Mammary epithelial cell (primary cell): ENCODE measurements at regions of chr20 and their contacts with region 1.

Region 1: GRCh38 chr20:5788385-5788895 is 38.2 kb downstream of the SHLD1 start:
- DNase-seq: peak; percentile 60
- H3K4me3 ChIP-seq: no peak overlapping the region
- H3K27ac ChIP-seq: no peak overlapping the region
- H3K4me1 ChIP-seq: no peaks in the 10 kb centered on the region
- H3K27me3 ChIP-seq: no peaks in the 10 kb centered on the region
- CTCF ChIP-seq: peak; percentile 80 to 91

Region 2: GRCh38 chr20:5557123-5557522 is 231.3 kb before region 1 on chr20:
- CTCF ChIA-PET with region 1: no interaction called
- dilution Hi-C with region 1: no loop called
- in situ Hi-C with region 1: no loop called
- intact Hi-C with region 1: loop called (anchors 1 kb)
- DNase-seq: peak; percentile 11
- H3K4me3 ChIP-seq: no peak overlapping the region
- H3K27ac ChIP-seq: no peak overlapping the region
- H3K4me1 ChIP-seq: no peaks in the 10 kb centered on the region
- H3K27me3 ChIP-seq: no peaks in the 10 kb centered on the region
- CTCF ChIP-seq: peak; percentile 57 to 61

Region 3: DNA sequence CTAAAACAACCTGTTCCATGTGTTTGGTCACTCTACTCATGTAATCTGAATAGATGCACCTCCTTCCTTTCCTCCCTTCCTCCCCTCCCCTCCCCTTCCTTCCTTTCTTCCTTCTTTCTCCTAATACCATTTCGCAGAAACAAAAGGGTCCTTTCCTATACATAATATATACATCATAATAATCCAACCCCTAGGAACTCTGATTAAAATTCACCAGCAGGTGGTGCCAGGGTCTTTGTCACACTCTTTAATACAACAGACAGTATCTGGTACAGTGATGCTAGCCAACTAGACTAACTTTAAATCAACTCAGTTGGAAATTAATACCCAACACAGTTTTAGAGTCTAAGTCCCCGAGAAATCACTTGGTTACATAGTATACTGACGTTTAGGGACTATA is 219.4 kb before region 1 on chr20:
- CTCF ChIA-PET with region 1: interaction called, 30 read pairs
- dilution Hi-C with region 1: no loop called
- in situ Hi-C with region 1: loop called in 1 of 2 experiments (anchors 10 kb)
- intact Hi-C with region 1: loop called (anchors 1 kb)
- DNase-seq: peak; percentile 27
- H3K4me3 ChIP-seq: no peak overlapping the region
- H3K27ac ChIP-seq: no peak overlapping the region
- H3K4me1 ChIP-seq: no peaks in the 10 kb centered on the region
- H3K27me3 ChIP-seq: no peaks in the 10 kb centered on the region
- CTCF ChIP-seq: peak; percentile 22 to 24

Region 4: GRCh38 chr20:5658912-5659345 is 129.5 kb before region 1 on chr20:
- CTCF ChIA-PET with region 1: interaction called, 6 read pairs
- dilution Hi-C with region 1: no loop called
- in situ Hi-C with region 1: no loop called
- intact Hi-C with region 1: loop called (anchors 5 kb)
- DNase-seq: peak; percentile 83
- H3K4me3 ChIP-seq: no peak overlapping the region
- H3K27ac ChIP-seq: peak overlapping the region; percentile 54
- H3K4me1 ChIP-seq: peaks cover 43% of the 10 kb centered on the region
- H3K27me3 ChIP-seq: no peaks in the 10 kb centered on the region
- CTCF ChIP-seq: no peak

Region 5: GRCh38 chr20:5844063-5844681 is 55.7 kb after region 1 on chr20:
- CTCF ChIA-PET with region 1: no interaction called
- dilution Hi-C with region 1: no loop called
- in situ Hi-C with region 1: no loop called
- intact Hi-C with region 1: no loop called
- DNase-seq: peak; percentile 26
- H3K4me3 ChIP-seq: no peak overlapping the region
- H3K27ac ChIP-seq: no peak overlapping the region
- H3K4me1 ChIP-seq: peaks cover 13% of the 10 kb centered on the region
- H3K27me3 ChIP-seq: no peaks in the 10 kb centered on the region
- CTCF ChIP-seq: no peak

Region 6: DNA sequence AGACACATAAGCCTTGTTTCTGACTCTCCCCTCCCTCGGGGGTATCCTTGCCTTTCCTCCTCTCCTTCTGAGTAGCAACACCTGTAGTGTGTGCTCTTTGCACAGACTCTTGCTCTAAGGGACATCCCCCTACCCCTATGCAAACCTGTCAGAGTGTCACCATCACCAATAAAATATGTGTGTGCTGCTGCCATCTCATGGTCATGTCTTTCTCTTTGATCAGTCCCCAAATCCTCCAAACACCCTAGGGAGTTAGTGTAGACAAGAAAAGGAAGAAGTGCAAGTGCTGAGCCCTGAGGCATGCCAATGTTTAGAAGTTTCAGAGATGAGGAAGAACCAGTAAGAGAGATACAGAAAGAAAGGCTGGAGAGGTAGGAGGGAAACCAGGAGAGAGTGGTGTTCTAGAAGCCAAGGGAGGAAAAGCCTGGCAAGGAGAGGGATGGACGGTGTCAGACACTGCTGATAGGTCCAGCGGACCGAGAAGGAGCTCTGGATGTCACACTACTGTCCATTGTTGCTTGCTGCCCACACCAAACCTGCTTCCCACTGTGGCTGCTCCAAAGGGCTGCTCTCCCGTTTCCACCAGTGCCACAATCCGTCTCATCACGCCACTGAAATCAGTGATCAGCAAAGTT is 145.5 kb after region 1 on chr20:
- CTCF ChIA-PET with region 1: no interaction called
- dilution Hi-C with region 1: no loop called
- in situ Hi-C with region 1: no loop called
- intact Hi-C with region 1: loop called (anchors 1 kb)
- DNase-seq: no peak
- H3K4me3 ChIP-seq: no peak overlapping the region
- H3K27ac ChIP-seq: no peak overlapping the region
- H3K4me1 ChIP-seq: no peaks in the 10 kb centered on the region
- H3K27me3 ChIP-seq: no peaks in the 10 kb centered on the region
- CTCF ChIP-seq: peak; percentile 28 to 56

Region 7: DNA sequence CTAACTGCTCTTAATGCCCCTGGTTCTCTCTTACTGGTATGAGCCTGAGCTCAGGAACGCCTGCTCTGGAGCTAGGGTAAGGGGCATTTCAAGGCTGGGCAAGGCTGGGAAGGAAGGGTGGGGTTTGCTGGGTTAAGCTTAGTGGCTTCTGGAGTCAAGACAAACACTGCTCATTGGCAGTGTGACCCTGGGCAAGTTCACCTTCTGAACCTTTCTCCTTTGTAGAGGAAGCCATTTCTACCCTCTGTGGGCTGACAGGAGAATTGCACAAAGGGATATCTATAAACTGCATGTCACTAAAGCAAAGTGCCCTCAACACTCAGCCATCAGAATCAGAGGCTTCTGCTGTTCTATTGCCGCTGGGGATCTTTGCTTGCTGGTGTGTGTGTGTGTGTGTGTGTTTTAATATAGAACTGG is 285.7 kb after region 1 on chr20:
- CTCF ChIA-PET with region 1: no interaction called
- dilution Hi-C with region 1: no loop called
- in situ Hi-C with region 1: no loop called
- intact Hi-C with region 1: loop called (anchors 5 kb)
- DNase-seq: no peak
- H3K4me3 ChIP-seq: no peak overlapping the region
- H3K27ac ChIP-seq: no peak overlapping the region
- H3K4me1 ChIP-seq: no peaks in the 10 kb centered on the region
- H3K27me3 ChIP-seq: no peaks in the 10 kb centered on the region
- CTCF ChIP-seq: peak; percentile 13 to 30

Region 8: GRCh38 chr20:6583134-6583738 is 794.8 kb after region 1 on chr20:
- CTCF ChIA-PET with region 1: no interaction called
- dilution Hi-C with region 1: no loop called
- in situ Hi-C with region 1: no loop called
- intact Hi-C with region 1: no loop called
- DNase-seq: peak; percentile 58
- H3K4me3 ChIP-seq: no peak overlapping the region
- H3K27ac ChIP-seq: no peak overlapping the region
- H3K4me1 ChIP-seq: peaks cover 10% of the 10 kb centered on the region
- H3K27me3 ChIP-seq: no peaks in the 10 kb centered on the region
- CTCF ChIP-seq: peak; percentile 72 to 80